ENCODE measurements at regions of chr5 and their contacts with region 1.

Region 1: GRCh38 chr5:80275347-80275746 is 19.5 kb upstream of the SERINC5 start:
- DNase-seq: no peak
- H3K4me3 ChIP-seq: no peak overlapping the region
- H3K27ac ChIP-seq: no peak overlapping the region
- H3K4me1 ChIP-seq: no peaks in the 10 kb centered on the region
- H3K27me3 ChIP-seq: no peaks in the 10 kb centered on the region
- CTCF ChIP-seq: peak; percentile 21 to 49

Region 2: GRCh38 chr5:80193401-80193800 is 81.9 kb before region 1 on chr5:
- CTCF ChIA-PET with region 1: interaction called, 16 read pairs
- dilution Hi-C with region 1: no loop called
- in situ Hi-C with region 1: no loop called
- intact Hi-C with region 1: no loop called
- DNase-seq: no peak
- H3K4me3 ChIP-seq: no peak overlapping the region
- H3K27ac ChIP-seq: no peak overlapping the region
- H3K4me1 ChIP-seq: peaks cover 7% of the 10 kb centered on the region
- H3K27me3 ChIP-seq: no peaks in the 10 kb centered on the region
- CTCF ChIP-seq: no peak

Measured in mammary epithelial cell (primary cell).